ENCODE measurements at regions of chr2 and their contacts with region 1.

Region 1: DNA sequence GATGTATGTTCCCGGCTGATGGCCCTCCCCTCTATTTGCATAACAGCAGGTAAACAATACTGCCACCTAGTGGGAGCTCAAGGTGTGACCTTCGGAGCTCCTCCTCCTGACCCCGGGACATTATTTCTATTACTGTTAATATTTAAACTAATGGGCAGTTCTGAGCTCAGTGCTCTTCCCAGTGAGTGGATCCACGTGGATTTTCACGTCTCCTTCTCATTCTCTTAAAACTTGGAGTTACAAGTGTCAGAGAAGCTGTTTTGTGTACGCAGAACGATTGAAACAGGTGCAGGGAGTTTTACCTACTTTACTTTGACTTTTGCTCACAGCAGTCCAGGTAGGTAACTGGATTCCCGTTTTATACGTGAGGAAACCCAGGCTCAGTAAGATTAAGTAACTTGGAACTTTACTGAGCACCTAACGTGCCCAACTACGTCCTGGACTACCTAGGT is 127.3 kb downstream of the PRKCE start:
- DNase-seq: peak; percentile 78
- H3K4me3 ChIP-seq: no peak overlapping the region
- H3K27ac ChIP-seq: no peak overlapping the region
- H3K4me1 ChIP-seq: peaks cover 14% of the 10 kb centered on the region
- H3K27me3 ChIP-seq: no peaks in the 10 kb centered on the region

Region 2: GRCh38 chr2:45643543-45644542 is 134.9 kb before region 1 on chr2:
- in situ Hi-C with region 1: loop called (anchors 10 kb)
- DNase-seq: peak; percentile 83
- H3K4me3 ChIP-seq: peak overlapping the region; percentile 94
- H3K27ac ChIP-seq: no peak overlapping the region
- H3K4me1 ChIP-seq: no peaks in the 10 kb centered on the region
- H3K27me3 ChIP-seq: no peaks in the 10 kb centered on the region